T-cell (primary cell): ENCODE measurements at regions of chr17 and their contacts with region 1.

Region 1: DNA sequence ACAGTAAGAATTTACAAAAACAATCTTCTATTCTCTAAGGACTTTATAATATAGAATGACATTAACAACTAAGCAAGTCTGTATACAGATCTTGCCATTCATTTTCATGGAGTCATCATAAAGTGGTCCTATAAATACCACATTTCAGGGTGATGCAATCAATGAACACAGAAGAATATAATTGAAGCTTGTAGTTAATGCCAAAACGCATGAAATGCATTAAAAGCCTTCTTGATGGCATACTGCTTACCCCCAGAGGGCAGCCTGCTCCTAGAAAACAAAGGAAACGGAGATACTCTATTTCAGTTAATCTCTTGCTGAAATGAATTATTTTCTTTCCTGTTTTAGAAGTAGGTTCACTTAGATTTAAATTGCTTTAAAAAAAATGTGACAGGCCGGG is 45.2 kb upstream of the STAC2 start:
- DNase-seq: no peak
- ATAC-seq: no peak
- H3K4me3 ChIP-seq: no peak overlapping the region
- H3K4me3 Mint-ChIP-seq: no peak overlapping the region
- H3K27ac ChIP-seq: no peak overlapping the region
- H3K27ac Mint-ChIP-seq: no peak overlapping the region
- H3K4me1 ChIP-seq: no peaks in the 10 kb centered on the region
- H3K4me1 Mint-ChIP-seq: no peaks in the 10 kb centered on the region
- H3K27me3 ChIP-seq: no peaks in the 10 kb centered on the region
- H3K27me3 Mint-ChIP-seq: no peaks in the 10 kb centered on the region

Region 2: DNA sequence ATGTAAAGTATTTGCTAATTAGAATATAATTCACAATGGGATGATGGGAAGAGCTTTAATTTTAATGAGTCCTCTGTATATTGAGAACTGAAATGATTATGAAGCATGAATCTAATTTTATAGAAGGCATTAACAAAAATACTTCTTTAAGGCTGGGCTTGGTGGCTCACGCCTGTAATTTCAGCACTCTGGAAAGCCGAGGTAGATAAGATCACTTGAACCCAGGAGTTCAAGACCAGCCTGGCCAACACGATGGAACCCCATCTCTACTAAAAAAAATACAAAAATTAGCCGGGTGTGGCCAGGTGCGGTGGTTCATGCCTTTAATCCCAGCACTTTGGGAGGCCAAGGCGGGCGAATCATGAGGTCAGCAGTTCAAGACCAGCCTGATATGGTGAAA is 202.4 kb after region 1 on chr17:
- CTCF ChIA-PET with region 1: no interaction called
- POLR2A ChIA-PET with region 1: interaction called in 1 of 2 experiments, 12 read pairs
- DNase-seq: no peak
- ATAC-seq: no peak
- H3K4me3 ChIP-seq: no peak overlapping the region
- H3K4me3 Mint-ChIP-seq: no peak overlapping the region
- H3K27ac ChIP-seq: no peak overlapping the region
- H3K27ac Mint-ChIP-seq: no peak overlapping the region
- H3K4me1 ChIP-seq: no peaks in the 10 kb centered on the region
- H3K4me1 Mint-ChIP-seq: peaks cover 0 to 14% (median 7%) of the 10 kb centered on the region in 3 donors
- H3K27me3 ChIP-seq: no peaks in the 10 kb centered on the region
- H3K27me3 Mint-ChIP-seq: no peaks in the 10 kb centered on the region